OCI-LY7 (cell line): ENCODE measurements at regions of chr9 and their contacts with region 1.

Region 1: GRCh38 chr9:27333241-27334052 is 36.5 kb upstream of the EQTN start:
- DNase-seq: peak; percentile 66
- H3K4me3 ChIP-seq: no peak overlapping the region
- H3K27ac ChIP-seq: no peak overlapping the region
- H3K4me1 ChIP-seq: no peaks in the 10 kb centered on the region
- CTCF ChIP-seq: peak; percentile 90

Region 2: GRCh38 chr9:27292659-27293405 is 40.6 kb before region 1 on chr9:
- CTCF ChIA-PET with region 1: no interaction called
- POLR2A ChIA-PET with region 1: no interaction called
- intact Hi-C with region 1: no loop called
- DNase-seq: no peak
- H3K4me3 ChIP-seq: no peak overlapping the region
- H3K27ac ChIP-seq: no peak overlapping the region
- H3K4me1 ChIP-seq: no peaks in the 10 kb centered on the region
- CTCF ChIP-seq: no peak

Region 3: DNA sequence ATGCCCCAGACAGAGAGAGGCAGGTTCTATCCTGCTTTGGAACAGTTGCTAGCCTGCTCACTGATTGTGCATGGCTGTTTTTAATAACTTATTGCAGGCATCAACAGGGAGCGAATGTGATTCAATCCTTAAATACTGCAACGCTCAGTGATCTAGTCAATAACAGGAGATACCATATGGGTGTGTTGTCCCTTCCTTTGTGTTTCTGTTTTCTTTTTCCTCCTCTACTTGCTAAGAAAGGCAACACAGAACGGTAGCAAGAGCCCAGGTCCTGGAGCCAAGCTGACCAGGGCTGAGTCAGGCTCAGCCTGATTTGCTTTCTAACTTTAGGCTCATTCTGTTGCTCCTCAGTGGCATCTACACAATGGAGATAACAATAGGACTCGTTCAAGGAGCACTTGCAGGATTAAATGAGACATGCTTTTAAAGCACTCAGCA is 62.1 kb after region 1 on chr9:
- CTCF ChIA-PET with region 1: no interaction called
- POLR2A ChIA-PET with region 1: interaction called, 3 read pairs
- intact Hi-C with region 1: loop called (anchors 5 kb)
- DNase-seq: no peak
- H3K4me3 ChIP-seq: no peak overlapping the region
- H3K27ac ChIP-seq: no peak overlapping the region
- H3K4me1 ChIP-seq: no peaks in the 10 kb centered on the region
- CTCF ChIP-seq: no peak

Region 4: GRCh38 chr9:27427273-27427645 is 93.8 kb after region 1 on chr9:
- CTCF ChIA-PET with region 1: no interaction called
- POLR2A ChIA-PET with region 1: no interaction called
- intact Hi-C with region 1: loop called (anchors 10 kb)
- DNase-seq: no peak
- H3K4me3 ChIP-seq: no peak overlapping the region
- H3K27ac ChIP-seq: no peak overlapping the region
- H3K4me1 ChIP-seq: no peaks in the 10 kb centered on the region
- CTCF ChIP-seq: no peak

Region 5: DNA sequence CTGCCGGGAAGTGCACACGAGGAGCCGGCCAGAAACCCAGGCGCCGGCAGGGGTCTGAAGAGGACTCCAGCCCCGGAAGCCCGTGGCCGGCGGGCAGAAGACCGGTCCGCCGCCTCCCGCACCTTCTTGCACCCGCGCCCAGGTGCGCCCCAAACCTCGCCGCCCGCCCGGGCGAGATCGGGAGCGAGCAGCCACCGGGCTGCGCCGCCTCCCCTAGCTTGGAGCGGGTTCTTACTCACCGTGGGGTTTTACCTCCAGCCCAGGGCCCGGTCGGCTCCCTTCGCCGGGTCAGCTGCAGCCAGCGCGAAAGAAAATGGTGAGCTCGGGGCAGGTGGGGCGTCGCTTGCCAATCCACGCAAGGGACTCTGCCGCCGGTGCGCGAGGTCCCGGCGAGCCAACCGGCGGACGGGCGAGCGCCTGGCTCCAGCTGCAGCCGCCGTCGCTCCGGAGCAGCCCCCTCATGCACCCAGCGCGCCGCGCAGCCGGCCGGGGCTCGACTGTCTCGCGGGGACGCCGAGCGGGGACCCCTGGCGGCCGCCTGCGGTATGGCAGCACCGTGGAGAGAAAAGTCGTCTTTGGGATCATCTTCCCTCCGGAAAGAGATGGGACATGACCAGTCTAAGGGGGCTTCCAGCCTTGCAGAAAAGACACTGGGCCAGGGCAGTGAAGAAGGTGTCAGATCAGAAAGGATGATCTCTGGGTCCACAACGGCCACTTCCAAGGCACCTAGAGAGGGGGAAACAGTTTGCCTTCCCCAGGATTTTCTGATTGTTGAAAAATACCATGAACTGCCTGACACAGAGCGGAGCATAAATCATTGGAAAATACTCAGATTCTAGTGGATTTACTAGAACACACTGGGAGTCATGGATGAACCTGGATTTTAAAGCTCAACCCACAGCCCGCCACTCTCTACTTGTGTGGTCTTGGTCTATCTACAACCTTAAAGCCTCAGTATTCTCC is 196.2 kb after region 1 on chr9 and contains the start of gene MOB3B:
- CTCF ChIA-PET with region 1: interaction called, 5 read pairs
- POLR2A ChIA-PET with region 1: interaction called, 3 read pairs
- intact Hi-C with region 1: loop called (anchors 1 kb)
- DNase-seq: peak; percentile 73
- H3K4me3 ChIP-seq: peak within 1 kb of the TSS; percentile 62
- H3K27ac ChIP-seq: no peak within 1 kb of the TSS
- H3K4me1 ChIP-seq: peaks cover 5% of the 10 kb centered on the region
- CTCF ChIP-seq: peak; percentile 82
- total RNA-seq, gene MOB3B: not detected in 2 replicates

Region 6: GRCh38 chr9:27634879-27635278 is 301.4 kb after region 1 on chr9:
- CTCF ChIA-PET with region 1: no interaction called
- POLR2A ChIA-PET with region 1: no interaction called
- intact Hi-C with region 1: loop called (anchors 10 kb)
- DNase-seq: no peak
- H3K4me3 ChIP-seq: no peak overlapping the region
- H3K27ac ChIP-seq: no peak overlapping the region
- H3K4me1 ChIP-seq: no peaks in the 10 kb centered on the region
- CTCF ChIP-seq: no peak

Region 7: GRCh38 chr9:27726244-27727081 is 393.0 kb after region 1 on chr9:
- CTCF ChIA-PET with region 1: no interaction called
- POLR2A ChIA-PET with region 1: no interaction called
- intact Hi-C with region 1: loop called (anchors 10 kb)
- DNase-seq: peak; percentile 53
- H3K4me3 ChIP-seq: no peak overlapping the region
- H3K27ac ChIP-seq: no peak overlapping the region
- H3K4me1 ChIP-seq: no peaks in the 10 kb centered on the region
- CTCF ChIP-seq: peak; percentile 83